ENCODE measurements at regions of chrX and their contacts with region 1.

Region 1: GRCh38 chrX:37745354-37745753 is 34.5 kb upstream of the CYBB start:
- DNase-seq: peak; percentile 61
- ATAC-seq: peak; percentile 85
- H3K4me3 ChIP-seq: no peak overlapping the region
- H3K27ac ChIP-seq: no peak overlapping the region
- H3K4me1 ChIP-seq: no peaks in the 10 kb centered on the region
- H3K27me3 ChIP-seq: no peaks in the 10 kb centered on the region; the same call in 1 of the 2 replicates
- CTCF ChIP-seq: peak; percentile 77
- POLR2A ChIP-seq: no peak
- RAD21 ChIP-seq: peak; percentile 82

Region 2: GRCh38 chrX:37825209-37825842 is 80.0 kb after region 1 on chrX:
- CTCF ChIA-PET with region 1: interaction called, 21 read pairs
- POLR2A ChIA-PET with region 1: no interaction called
- dilution Hi-C with region 1: no loop called
- in situ Hi-C with region 1: no loop called
- intact Hi-C with region 1: loop called (anchors 1 kb)
- DNase-seq: peak; percentile 38
- ATAC-seq: peak; percentile 86
- H3K4me3 ChIP-seq: no peak overlapping the region
- H3K27ac ChIP-seq: no peak overlapping the region
- H3K4me1 ChIP-seq: peaks cover 1% of the 10 kb centered on the region; the same call in 1 of the 2 replicates
- H3K27me3 ChIP-seq: peaks cover 5% of the 10 kb centered on the region; the same call in 1 of the 2 replicates
- CTCF ChIP-seq: peak; percentile 80
- POLR2A ChIP-seq: no peak
- RAD21 ChIP-seq: peak; percentile 69

Region 3: GRCh38 chrX:37905436-37906147 is 160.2 kb after region 1 on chrX:
- CTCF ChIA-PET with region 1: interaction called, 4 read pairs
- POLR2A ChIA-PET with region 1: no interaction called
- dilution Hi-C with region 1: no loop called
- in situ Hi-C with region 1: no loop called
- intact Hi-C with region 1: loop called (anchors 1 kb)
- DNase-seq: peak; percentile 30
- ATAC-seq: peak; percentile 92
- H3K4me3 ChIP-seq: peak overlapping the region; percentile 38
- H3K27ac ChIP-seq: no peak overlapping the region
- H3K4me1 ChIP-seq: no peaks in the 10 kb centered on the region
- H3K27me3 ChIP-seq: no peaks in the 10 kb centered on the region
- CTCF ChIP-seq: peak; percentile 35
- POLR2A ChIP-seq: no peak
- RAD21 ChIP-seq: no peak; the same call in 1 of the 2 replicates

Region 4: GRCh38 chrX:37926700-37927099 is 181.3 kb after region 1 on chrX:
- CTCF ChIA-PET with region 1: interaction called, 3 read pairs
- POLR2A ChIA-PET with region 1: no interaction called
- dilution Hi-C with region 1: no loop called
- in situ Hi-C with region 1: no loop called
- intact Hi-C with region 1: loop called (anchors 5 kb)
- DNase-seq: peak; percentile 41
- ATAC-seq: peak; percentile 76
- H3K4me3 ChIP-seq: no peak overlapping the region
- H3K27ac ChIP-seq: no peak overlapping the region
- H3K4me1 ChIP-seq: no peaks in the 10 kb centered on the region
- H3K27me3 ChIP-seq: no peaks in the 10 kb centered on the region
- CTCF ChIP-seq: peak; percentile 61
- POLR2A ChIP-seq: no peak
- RAD21 ChIP-seq: peak; percentile 59

Region 5: DNA sequence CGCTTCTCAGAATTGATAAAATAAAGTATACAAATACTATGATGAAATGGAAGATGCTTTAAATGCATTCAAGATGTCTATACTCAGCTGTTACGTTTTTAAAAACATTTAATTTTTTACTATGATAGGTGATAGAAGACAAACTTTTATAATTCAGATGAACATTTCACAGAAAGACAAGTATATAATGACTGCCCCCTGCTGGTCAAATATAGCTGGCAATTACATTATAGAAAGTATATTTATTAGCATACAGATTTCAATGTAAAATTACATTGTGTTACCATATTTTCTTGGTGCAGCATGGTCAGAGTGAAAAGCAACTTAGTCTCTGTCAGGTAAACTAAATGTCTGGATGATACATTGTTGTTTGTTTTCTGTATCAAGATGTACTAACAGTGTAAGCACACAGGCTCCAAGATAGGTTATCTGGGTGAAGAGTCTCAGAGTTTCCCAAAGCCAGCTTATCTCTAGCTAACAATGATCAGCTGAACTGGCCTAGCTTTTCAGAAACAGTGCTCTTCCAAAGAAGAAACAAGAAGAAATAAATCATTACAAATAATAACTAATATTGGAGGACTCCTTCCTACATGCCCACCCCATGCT is 421.2 kb after region 1 on chrX:
- CTCF ChIA-PET with region 1: interaction called, 9 read pairs
- POLR2A ChIA-PET with region 1: no interaction called
- dilution Hi-C with region 1: no loop called
- in situ Hi-C with region 1: loop called (anchors 10 kb)
- intact Hi-C with region 1: loop called (anchors 1 kb)
- DNase-seq: peak; percentile 26
- ATAC-seq: no peak
- H3K4me3 ChIP-seq: no peak overlapping the region
- H3K27ac ChIP-seq: no peak overlapping the region
- H3K4me1 ChIP-seq: no peaks in the 10 kb centered on the region
- H3K27me3 ChIP-seq: no peaks in the 10 kb centered on the region
- CTCF ChIP-seq: peak; percentile 71
- POLR2A ChIP-seq: no peak
- RAD21 ChIP-seq: peak; percentile 57

Region 6: DNA sequence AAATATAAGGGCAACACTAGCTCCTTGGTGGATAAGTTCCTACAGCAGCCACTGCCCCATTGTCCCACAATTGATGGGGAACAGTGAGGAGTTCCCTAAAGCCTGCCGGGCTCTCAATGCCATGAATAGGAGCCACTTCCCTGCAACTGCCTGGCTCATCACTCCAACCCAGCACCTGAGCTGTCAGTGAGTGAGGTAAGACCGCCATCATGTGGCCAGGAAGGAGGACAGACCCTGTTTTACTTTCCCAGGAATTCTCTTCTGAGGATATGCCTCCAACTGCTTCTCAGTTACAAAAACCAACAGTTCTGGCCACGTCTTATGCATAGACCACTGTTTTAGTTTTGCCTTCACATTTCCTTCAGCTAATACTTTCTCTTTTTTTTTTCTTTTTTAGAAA is 429.8 kb after region 1 on chrX:
- CTCF ChIA-PET with region 1: no interaction called
- POLR2A ChIA-PET with region 1: no interaction called
- dilution Hi-C with region 1: no loop called
- in situ Hi-C with region 1: loop called (anchors 10 kb)
- intact Hi-C with region 1: loop called (anchors 2 kb)
- DNase-seq: peak; percentile 28
- ATAC-seq: peak; percentile 48; the same call in 1 of the 2 replicates
- H3K4me3 ChIP-seq: no peak overlapping the region
- H3K27ac ChIP-seq: no peak overlapping the region
- H3K4me1 ChIP-seq: no peaks in the 10 kb centered on the region
- H3K27me3 ChIP-seq: peaks cover 1% of the 10 kb centered on the region; the same call in 1 of the 2 replicates
- CTCF ChIP-seq: peak; percentile 53
- POLR2A ChIP-seq: no peak
- RAD21 ChIP-seq: peak; percentile 74